ENCODE measurements at regions of chr2 and their contacts with region 1.

Region 1: GRCh38 chr2:230205034-230205433 is 14.8 kb downstream of the SP110 start:
- H3K4me3 Mint-ChIP-seq: no peak overlapping the region
- H3K27ac Mint-ChIP-seq: no peak overlapping the region
- H3K4me1 Mint-ChIP-seq: peaks cover 35% of the 10 kb centered on the region
- H3K27me3 Mint-ChIP-seq: no peaks in the 10 kb centered on the region

Region 2: DNA sequence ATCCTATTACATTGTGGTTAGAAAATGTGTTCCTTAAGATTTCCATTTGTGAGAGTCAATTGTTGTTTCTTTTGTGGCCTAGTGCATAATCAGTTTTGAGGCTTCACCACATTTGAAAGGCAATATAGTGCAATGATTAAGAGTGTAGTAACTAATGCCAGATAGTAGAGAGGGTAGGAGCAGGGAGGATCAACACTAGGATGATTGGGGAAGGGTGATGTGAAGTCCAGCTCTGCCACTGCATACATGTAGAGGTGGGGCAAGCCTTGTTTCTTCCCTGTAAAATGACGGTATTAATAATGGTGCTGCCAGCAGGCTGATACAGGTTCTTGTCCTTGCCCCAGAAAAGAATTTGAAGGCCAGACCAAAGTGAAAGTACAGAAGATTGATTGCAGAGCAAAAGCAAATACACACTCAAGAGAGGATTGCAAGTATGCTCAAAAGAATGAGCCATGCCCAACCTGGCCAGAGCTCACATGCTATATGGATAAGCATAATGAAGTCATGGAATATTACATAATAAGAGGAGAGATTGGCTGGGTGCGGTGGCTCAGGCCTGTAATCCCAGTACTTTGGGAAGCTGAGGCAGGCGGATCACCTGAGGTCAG is 218.9 kb after region 1 on chr2:
- intact Hi-C with region 1: loop called (anchors 5 kb)
- H3K4me3 Mint-ChIP-seq: no peak overlapping the region
- H3K27ac Mint-ChIP-seq: no peak overlapping the region
- H3K4me1 Mint-ChIP-seq: peaks cover 71% of the 10 kb centered on the region
- H3K27me3 Mint-ChIP-seq: no peaks in the 10 kb centered on the region

Region 3: DNA sequence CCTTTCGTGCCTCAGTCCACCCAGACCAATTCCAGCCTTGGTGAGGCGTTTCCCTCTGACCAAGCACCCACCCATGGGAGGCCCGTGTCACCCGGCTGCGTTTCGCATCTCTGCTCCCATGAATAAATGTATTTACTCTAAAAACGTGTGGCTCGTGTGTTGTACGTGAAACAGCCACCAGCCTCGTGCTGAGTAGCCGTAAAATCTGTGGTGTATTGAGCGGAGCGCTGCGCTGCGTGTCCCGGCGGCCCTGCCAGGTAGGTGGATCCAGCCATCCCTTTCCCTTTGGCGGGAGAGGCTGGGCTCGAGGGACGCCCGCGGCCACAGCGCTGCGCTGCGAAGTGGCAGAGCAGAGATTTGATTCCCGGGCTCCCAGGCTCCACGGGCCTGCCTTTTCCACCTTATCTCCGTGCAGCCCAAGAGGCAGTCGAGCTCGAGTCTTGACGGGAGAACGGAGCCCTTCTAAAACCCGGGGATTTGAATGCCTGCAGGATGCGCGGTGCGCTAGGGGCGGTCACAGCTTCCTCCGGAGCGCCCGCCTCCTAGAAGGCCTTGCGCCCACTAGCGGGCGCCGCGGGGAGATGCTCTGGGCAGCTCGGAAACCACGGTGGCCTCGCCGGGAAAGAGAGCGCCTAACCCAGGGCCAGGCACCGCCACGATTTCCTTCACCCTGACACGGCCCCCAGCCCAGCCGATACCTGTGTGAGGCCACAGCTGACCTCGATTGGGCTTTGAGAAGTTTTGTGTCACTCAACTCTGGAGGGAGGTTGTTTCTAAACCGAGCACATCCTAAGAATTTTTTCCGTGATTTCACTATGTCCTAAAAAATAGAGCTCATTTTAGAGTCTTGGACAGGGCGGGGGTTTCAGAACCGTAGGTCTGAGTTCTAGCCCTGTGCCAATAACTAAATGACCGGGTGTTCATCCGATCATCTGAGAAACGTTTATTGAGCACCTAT is 847.7 kb after region 1 on chr2:
- intact Hi-C with region 1: no loop called
- H3K4me3 Mint-ChIP-seq: peak overlapping the region; percentile 82
- H3K27ac Mint-ChIP-seq: peak overlapping the region; percentile 21
- H3K4me1 Mint-ChIP-seq: peaks cover 19% of the 10 kb centered on the region
- H3K27me3 Mint-ChIP-seq: peaks cover 45% of the 10 kb centered on the region